Astrocyte of the cerebellum (primary cell): ENCODE measurements at regions of chr18 and their contacts with region 1.

Region 1: DNA sequence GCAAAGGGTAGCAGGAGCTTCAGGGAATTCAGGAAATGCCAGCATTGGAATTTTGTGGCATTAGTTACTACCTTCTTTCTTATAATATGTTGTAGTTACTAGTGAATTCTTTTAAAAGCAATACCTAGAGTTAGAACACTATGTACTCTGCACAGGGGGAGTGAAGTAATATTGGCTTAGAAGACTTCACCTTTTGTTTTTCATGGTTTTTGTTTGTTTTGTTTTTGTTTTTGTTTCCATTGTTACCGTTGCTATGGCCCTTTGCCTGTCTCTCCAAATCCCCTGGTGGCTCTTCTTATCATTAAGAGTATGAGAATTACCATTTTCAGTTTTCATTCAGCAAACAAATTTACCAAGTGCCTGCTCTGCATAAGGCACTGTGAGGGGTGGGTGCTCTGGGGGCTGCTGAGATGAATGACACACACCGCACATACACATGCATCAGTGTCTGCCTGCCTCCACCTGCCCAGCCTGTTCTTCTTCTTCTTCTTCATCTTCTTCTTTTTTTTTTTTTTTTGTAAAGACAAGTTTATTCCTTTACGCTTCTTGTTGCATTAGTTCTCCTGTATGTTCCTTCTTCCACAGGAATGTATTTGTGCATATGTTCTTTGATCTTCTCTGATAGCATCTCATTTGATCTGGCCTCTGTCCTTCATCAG is 160.2 kb downstream of the HAUS1 start:
- DNase-seq: peak; percentile 54
- H3K4me3 ChIP-seq: no peak overlapping the region
- CTCF ChIP-seq: peak; percentile 6

Region 2: DNA sequence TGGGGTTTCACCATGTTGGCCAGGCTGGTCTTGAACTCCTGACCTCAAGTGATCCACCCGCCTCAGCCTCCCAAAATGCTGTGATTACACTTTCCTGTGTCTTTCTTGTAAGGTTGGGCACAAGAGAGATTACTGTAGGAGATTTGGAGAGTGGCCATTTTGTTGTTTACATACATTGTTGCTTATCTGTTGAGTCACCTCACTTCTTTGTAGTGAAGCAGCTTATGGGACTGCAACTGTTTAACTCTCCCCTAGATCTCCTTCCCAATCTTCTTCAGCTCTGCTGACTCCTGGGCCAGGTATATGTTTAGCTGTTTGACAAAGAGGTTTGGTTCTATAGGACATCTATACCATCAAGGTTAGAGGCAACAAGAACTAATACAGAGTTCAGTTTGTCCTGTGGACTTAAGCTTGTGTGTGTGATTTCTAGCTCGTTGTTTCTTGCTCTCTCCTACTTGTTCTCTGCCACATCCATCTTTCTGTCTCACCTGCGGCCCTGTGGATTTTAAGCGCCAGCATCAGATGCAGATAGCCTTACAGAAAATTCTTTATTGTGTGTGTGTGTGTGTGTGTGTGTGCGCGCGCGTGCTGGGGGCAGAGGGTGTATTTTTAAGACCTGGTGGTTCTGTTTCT is 64.7 kb before region 1 on chr18:
- in situ Hi-C with region 1: loop called (anchors 5 kb)
- DNase-seq: peak; percentile 18
- H3K4me3 ChIP-seq: no peak overlapping the region
- CTCF ChIP-seq: no peak

Region 3: GRCh38 chr18:46226461-46226860 is 37.9 kb before region 1 on chr18:
- in situ Hi-C with region 1: no loop called
- DNase-seq: no peak
- H3K4me3 ChIP-seq: no peak overlapping the region
- CTCF ChIP-seq: no peak

Region 4: GRCh38 chr18:46315187-46315586 is 50.8 kb after region 1 on chr18:
- in situ Hi-C with region 1: no loop called
- DNase-seq: no peak
- H3K4me3 ChIP-seq: no peak overlapping the region
- CTCF ChIP-seq: no peak